Psoas muscle (tissue), 8 donors: ENCODE measurements at regions of chr12 and their contacts with region 1.

Region 1: DNA sequence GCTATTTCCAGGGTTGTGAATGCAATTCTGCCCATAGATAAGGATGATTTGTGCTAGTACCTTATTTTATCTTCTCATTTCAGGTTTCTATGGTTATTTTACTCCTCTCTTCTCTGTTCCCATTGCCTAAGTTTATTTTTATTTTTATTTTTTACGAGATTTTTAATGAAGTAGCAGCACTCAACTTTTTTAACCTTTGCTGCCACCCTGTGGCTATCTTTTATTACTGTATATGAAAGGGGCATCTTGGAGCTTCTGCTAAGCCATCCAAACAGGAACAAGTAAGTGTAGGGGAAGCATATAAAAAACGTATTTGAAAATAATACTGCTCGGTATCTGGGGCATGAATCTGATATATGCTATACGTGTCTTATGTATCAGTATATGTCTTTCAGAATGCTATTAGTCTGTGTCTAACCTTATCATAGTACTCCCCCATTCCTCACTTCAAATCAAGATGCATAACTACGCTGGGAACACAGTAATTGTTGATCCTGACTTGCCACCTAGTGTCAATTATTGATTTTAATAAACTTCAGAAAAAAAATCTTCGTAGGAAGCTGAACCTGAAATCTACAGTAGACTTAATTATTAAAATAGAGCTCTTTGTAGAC is 60.3 kb downstream of the KLRG1 start:
- DNase-seq: no peak
- ATAC-seq: peak in 3 of 4 donors; percentile 51 to 80 (median 57)
- H3K4me3 ChIP-seq: no peak overlapping the region
- H3K27ac ChIP-seq: no peak overlapping the region
- H3K4me1 ChIP-seq: no peaks in the 10 kb centered on the region
- H3K27me3 ChIP-seq: no peaks in the 10 kb centered on the region
- CTCF ChIP-seq: peak; percentile 54

Region 2: GRCh38 chr12:8544295-8544694 is 505.3 kb before region 1 on chr12:
- intact Hi-C with region 1: loop called (anchors 10 kb)
- DNase-seq: peak in 1 of 2 donors; percentile 52
- ATAC-seq: peak in 2 of 4 donors; percentile 63 to 65
- H3K4me3 ChIP-seq: no peak overlapping the region
- H3K27ac ChIP-seq: no peak overlapping the region
- H3K4me1 ChIP-seq: no peaks in the 10 kb centered on the region
- H3K27me3 ChIP-seq: no peaks in the 10 kb centered on the region
- CTCF ChIP-seq: peak; percentile 88

Region 3: DNA sequence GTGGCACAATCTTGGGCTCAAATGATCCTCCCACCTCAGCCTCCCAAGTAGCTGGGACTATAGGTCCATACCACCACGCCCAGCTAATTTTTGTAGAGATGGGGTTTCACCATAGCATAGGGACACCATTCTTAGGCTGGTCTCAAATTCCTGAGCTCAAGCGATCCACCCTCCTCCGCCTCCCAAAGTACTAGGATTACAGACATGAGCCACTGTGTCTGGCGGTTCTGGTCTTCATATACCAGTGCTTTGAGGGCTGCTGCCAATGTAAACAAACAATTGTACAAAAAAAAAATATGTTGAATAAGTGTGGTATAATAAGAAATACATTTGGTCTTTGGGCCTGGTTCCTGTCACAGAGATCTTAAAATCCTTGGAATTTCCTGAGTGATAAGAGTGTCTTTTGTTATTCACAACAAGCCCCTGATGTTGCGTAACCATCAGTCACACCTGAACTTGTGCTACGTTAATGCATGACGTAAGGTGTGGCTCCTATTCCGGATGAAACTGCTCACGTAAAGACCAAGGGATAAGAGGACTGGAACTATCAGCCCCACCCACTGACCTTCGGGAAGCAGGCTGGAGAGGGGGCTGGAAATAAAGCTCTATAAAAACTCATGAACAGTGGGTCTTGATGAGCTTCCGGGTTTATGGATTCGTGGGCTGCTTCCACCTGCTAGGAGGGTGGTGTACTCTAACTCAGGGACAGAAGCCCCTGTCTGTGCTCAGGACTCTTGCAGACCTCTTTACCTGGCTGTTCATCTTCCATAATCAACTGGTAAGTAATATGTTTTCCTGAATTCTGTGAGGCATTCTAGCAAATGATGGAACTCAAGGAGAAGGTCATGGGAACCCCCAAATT is 368.4 kb before region 1 on chr12:
- intact Hi-C with region 1: loop called (anchors 5 to 10 kb)
- DNase-seq: no peak
- ATAC-seq: peak in 1 of 4 donors; percentile 35
- H3K4me3 ChIP-seq: peak overlapping the region; percentile 2
- H3K27ac ChIP-seq: no peak overlapping the region
- H3K4me1 ChIP-seq: no peaks in the 10 kb centered on the region
- H3K27me3 ChIP-seq: peaks cover 0 to 4% (median 0%) of the 10 kb centered on the region in 3 donors
- CTCF ChIP-seq: no peak

Region 4: DNA sequence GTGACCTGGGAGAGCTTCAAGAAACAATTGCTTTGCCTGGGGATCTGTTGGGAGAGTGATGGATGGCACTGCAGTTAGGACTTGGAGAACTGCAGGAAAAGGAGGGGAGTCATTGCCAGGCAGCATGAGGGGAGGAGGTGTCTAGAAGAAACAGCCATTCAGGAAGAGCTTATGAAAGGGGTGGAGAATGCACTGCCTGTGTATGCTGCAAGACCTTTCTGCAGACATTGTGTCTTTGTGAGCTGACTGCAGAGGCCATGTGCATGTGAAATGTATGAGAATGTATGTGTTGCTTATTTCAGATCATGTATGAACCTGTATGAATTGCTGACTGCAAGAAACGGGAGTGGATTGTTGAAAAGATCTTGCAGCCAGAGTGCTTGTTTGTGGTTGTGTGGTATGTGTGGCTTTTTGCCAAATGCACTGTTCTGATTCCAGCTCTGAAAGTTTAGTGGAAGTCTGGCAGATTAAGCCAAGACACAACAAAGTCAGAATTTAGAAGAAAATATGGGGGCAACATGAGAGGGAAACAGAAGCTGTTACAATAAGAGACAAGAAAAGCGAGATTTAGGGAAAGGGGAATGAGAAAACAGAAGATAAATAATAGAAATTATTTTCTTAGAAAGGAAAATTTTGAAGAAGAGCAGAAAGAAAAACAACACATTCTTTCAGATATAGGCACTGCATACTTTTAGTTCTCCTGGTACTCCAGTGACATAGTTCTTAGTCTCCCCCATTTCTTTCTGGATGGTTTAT is 361.6 kb before region 1 on chr12:
- intact Hi-C with region 1: loop called (anchors 5 to 10 kb)
- DNase-seq: peak in 1 of 2 donors; percentile 32
- ATAC-seq: peak in 3 of 4 donors; percentile 49 to 70 (median 67)
- H3K4me3 ChIP-seq: no peak overlapping the region
- H3K27ac ChIP-seq: no peak overlapping the region
- H3K4me1 ChIP-seq: peaks cover 10% of the 10 kb centered on the region
- H3K27me3 ChIP-seq: no peaks in the 10 kb centered on the region
- CTCF ChIP-seq: no peak

Region 5: GRCh38 chr12:8914716-8915526 is 134.7 kb before region 1 on chr12:
- intact Hi-C with region 1: loop called in 1 of 2 experiments (anchors 10 kb)
- DNase-seq: peak; percentile 35 to 60
- ATAC-seq: peak; percentile 50 to 67 (median 62)
- H3K4me3 ChIP-seq: peak overlapping the region; percentile 84
- H3K27ac ChIP-seq: peak overlapping the region; percentile 50
- H3K4me1 ChIP-seq: peaks cover 12% of the 10 kb centered on the region
- H3K27me3 ChIP-seq: no peaks in the 10 kb centered on the region
- CTCF ChIP-seq: no peak